Right ventricle myocardium superior (tissue), 1 donor: ENCODE measurements at regions of chr2 and their contacts with region 1.

Region 1: DNA sequence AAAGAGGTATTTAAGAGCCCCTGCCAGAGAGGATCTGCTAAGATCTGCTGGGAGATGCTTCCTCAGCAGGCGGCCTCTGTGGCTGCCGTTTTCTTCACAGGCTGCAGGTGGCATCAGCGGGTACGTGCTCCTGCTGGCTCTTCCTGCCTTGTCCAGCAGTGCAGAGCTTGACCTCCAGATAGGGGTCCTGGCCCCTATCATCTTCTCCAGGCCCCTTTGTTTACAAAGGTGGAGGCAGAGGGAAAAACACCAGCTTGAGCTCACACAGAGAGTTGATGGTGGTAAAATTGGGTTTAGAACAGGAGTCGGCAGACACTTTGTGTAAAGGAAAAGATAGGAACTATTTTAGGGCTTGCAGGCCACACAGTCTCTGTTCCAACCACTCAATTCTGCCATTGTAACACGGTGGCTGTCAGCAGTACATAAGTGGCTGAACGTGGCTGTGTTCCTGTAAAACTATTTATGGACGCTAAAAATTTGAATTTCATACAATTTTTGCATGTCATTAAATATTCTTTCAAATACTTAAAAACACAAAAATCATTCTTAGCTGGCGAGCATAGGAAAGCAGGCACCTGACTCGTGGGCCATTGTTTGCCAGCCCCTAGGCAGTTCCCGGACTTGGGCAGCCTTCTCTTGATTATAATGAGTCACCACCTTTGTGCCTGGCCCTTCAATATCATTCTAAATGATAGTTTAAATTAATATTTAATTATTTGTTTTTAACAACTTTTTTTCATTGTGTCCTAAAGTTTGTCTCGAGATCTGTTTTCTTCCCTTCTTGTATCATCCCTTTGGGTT is 98.2 kb upstream of the B3GNT7 start:
- DNase-seq: peak; percentile 73
- ATAC-seq: peak; percentile 81

Region 2: DNA sequence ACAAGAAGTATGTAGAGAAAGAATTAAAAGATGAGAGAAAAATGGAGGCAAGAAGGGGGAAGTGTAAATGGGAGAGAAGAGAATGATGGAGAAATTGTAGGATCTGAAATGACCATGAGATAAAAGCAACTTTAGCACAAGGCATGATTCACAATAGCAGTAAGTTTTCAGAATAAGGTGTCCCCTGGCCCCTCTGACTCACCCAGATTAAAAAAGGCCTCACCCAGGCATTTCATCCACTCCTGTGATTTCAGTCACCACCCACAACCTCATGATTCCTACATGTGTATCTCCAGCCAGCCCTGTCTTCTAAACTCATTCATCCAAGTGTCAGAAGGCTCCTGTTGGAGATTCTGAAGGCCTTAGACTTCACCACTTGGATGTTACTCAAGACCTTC is 824.7 kb before region 1 on chr2:
- intact Hi-C with region 1: no loop called
- DNase-seq: no peak
- ATAC-seq: no peak

Region 3: GRCh38 chr2:231200805-231201474 is 96.4 kb before region 1 on chr2:
- intact Hi-C with region 1: no loop called
- DNase-seq: no peak
- ATAC-seq: no peak

Region 4: DNA sequence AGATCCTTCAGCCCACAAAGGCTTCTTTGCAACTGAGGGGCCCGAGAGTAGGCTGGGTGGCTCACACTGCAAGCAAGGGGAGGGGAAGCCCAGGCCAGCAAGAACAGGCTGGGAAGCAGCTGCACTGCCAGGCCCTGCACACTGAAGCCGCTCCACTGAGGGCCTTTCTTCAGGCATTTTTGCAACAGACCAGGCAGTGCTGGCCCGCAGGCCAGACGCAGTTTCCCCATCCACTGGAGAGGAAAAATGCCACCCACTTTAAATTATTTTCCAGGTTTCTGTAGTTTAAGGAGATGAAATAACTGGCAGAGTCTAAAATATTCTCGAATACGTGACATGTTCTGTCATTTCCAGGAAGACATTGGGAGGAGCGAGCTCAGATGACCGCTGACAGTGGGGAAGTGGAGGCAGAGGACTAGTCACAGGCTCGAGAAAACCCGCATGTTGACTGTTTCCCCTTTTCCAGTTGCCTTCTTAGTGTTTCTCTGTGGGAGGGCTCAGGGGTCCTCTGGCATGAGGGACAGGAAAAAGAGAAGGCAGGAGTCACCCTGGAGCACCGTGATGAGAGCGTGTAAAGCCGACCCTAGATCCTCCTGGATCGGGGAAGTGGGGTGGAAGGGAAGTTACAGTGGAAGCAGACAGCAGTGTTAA is 44.9 kb after region 1 on chr2:
- intact Hi-C with region 1: no loop called
- DNase-seq: no peak
- ATAC-seq: peak; percentile 67

Region 5: DNA sequence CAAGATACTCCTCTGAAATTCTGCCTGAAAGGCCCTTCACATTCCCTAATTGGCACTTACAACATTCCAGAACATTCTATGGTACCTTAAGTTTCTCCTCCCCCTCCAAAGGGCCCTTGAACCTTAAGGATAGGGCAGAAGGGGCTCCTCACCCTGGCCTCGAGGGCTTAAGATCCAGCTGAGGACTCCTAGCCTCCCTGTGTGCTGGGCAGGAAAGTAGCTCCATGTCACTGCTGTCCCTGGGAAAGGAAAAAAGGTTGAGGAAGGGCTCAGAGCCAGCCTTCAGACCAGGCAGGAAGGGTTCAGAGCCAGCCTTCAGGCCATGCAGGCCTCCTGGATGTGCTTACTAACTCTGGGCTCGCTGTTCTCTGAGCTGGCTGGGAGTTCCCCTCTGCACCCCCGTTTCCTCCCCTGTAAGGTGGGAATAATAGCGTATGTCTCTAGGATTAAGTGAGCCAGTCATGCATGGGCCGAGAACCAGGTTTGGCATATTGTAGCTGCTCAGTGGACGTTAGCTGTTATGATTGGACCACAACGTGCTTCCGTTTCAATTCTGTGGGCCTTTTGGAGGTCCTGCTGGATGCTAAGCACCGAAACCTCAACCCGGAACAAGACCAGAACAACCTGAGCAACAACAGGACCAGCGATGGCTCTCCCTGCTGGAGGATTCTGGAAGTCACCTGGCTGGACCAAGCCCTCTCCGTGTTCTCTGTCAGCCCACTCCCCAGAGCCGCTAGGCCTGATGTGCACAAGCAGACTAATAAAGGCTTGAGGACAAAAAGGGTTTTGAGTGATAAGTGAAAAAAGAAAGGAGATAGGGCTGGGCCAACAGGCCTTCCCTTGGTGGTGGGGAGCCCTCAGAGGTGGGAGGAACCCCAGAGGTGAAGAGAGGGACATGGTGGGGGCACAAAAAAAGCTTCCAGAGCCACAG is 97.2 kb after region 1 on chr2:
- intact Hi-C with region 1: loop called (anchors 5 kb)
- DNase-seq: peak; percentile 40
- ATAC-seq: peak; percentile 19